SK-N-SH (cell line): ENCODE measurements at regions of chr16 and their contacts with region 1.

Region 1: GRCh38 chr16:57300387-57301125 is 16.1 kb upstream of the PLLP start:
- DNase-seq: peak; percentile 93
- H3K4me3 ChIP-seq: peak overlapping the region; percentile 56 to 62
- H3K27ac ChIP-seq: peak overlapping the region; percentile 76 to 87
- H3K4me1 ChIP-seq: peaks cover 0 to 7% of the 10 kb centered on the region in 2 experiments; a peak in 1 of 4 replicates
- H3K27me3 ChIP-seq: no peaks in the 10 kb centered on the region
- CTCF ChIP-seq: peak; percentile 97
- EP300 ChIP-seq: no peak; a peak in 1 of 4 replicates
- RAD21 ChIP-seq: peak; percentile 100

Region 2: DNA sequence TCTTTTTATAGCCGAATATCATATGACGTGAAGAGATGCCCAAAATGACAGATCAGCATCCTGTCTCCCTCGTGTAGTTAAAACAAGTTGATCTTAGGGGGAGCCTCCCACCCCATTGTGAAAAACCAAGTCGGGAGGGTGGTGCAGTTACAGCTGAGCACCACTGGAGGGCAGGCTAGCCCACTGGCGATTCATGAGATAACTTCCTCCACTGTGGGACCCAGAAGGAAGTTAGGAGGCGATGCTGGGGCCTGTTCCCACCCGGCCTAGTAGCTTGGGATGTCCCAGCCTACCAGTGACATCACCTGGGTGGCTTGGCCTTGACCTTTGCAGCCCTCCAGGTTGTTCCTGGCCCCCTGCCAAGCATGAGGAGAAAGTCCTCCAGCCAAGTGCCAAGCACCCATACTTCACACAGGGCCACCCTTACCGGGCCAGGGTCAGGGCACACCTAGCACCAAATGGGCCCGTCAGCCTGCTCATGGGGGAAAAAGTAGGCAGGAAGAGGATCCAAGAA is 216.2 kb before region 1 on chr16:
- CTCF ChIA-PET with region 1: interaction called, 25 read pairs
- POLR2A ChIA-PET with region 1: no interaction called
- DNase-seq: peak; percentile 87
- H3K4me3 ChIP-seq: peak overlapping the region in 1 of 2 experiments; percentile 47; a peak in 1 of 4 replicates
- H3K27ac ChIP-seq: no peak overlapping the region
- H3K4me1 ChIP-seq: peaks cover 0 to 4% of the 10 kb centered on the region in 2 experiments; a peak in 1 of 4 replicates
- H3K27me3 ChIP-seq: no peaks in the 10 kb centered on the region
- CTCF ChIP-seq: peak; percentile 97
- EP300 ChIP-seq: no peak
- RAD21 ChIP-seq: peak; percentile 91

Region 3: DNA sequence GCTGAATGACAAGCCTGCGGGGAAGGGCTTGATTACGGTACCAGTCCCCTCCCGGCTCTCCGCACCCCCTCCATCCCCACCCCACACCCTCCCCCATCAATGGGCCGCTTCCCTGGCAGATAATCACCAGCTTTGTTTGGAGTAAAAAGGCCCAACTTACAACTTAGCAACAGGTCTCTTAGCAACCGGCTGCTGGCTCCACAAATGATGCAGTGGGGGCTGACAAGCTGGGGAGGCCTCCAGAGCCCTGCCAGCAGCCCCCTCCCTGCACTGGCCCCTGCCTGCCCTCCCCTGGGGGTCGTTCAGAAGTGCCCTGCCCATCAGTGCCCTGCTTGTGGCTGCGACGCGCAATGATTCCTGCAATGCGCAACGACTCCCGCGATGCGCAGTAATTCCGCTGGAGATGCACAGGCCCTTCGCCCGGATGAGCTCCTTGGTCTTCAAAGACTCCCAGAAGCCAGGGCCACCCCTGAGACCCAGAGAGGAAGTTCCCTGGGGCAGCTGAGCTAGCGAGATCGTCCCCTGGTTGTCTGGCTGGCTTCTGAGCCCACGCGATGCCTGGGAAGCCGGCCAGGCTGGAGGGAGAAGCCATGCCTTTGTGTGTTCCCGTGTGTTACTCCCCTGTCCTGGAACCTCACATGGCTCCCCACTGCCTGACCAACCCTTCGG is 184.9 kb before region 1 on chr16:
- CTCF ChIA-PET with region 1: no interaction called
- POLR2A ChIA-PET with region 1: no interaction called
- DNase-seq: peak; percentile 70
- H3K4me3 ChIP-seq: no peak overlapping the region
- H3K27ac ChIP-seq: peak overlapping the region; percentile 51 to 57
- H3K4me1 ChIP-seq: peaks cover 0 to 15% of the 10 kb centered on the region in 2 experiments; a peak in 1 of 4 replicates
- H3K27me3 ChIP-seq: no peaks in the 10 kb centered on the region
- CTCF ChIP-seq: no peak
- EP300 ChIP-seq: no peak
- RAD21 ChIP-seq: no peak

Region 4: GRCh38 chr16:57279780-57280638 is 20.5 kb before region 1 on chr16:
- CTCF ChIA-PET with region 1: interaction called, 11 read pairs
- POLR2A ChIA-PET with region 1: no interaction called
- DNase-seq: no peak
- H3K4me3 ChIP-seq: no peak overlapping the region
- H3K27ac ChIP-seq: no peak overlapping the region
- H3K4me1 ChIP-seq: peaks cover 4 to 5% of the 10 kb centered on the region in 2 experiments; a peak in 2 of 4 replicates
- H3K27me3 ChIP-seq: no peaks in the 10 kb centered on the region
- CTCF ChIP-seq: no peak
- EP300 ChIP-seq: no peak
- RAD21 ChIP-seq: no peak

Region 5: GRCh38 chr16:57372372-57373116 is 72.0 kb after region 1 on chr16 and contains the start of gene CX3CL1:
- CTCF ChIA-PET with region 1: interaction called, 20 read pairs
- POLR2A ChIA-PET with region 1: no interaction called
- DNase-seq: peak; percentile 92
- H3K4me3 ChIP-seq: peak within 1 kb of the TSS; percentile 52 to 72
- H3K27ac ChIP-seq: peak within 1 kb of the TSS; percentile 57 to 96; a peak in 3 of 4 replicates
- H3K4me1 ChIP-seq: peaks cover 25 to 36% of the 10 kb centered on the region in 2 experiments; a peak in 3 of 4 replicates
- H3K27me3 ChIP-seq: no peaks in the 10 kb centered on the region
- CTCF ChIP-seq: peak; percentile 25; the same call in 1 of the 2 replicates
- EP300 ChIP-seq: peak in 1 of 2 experiments; percentile 64; a peak in 1 of 4 replicates
- RAD21 ChIP-seq: peak; percentile 38
- polyA plus RNA-seq, gene CX3CL1: 5.8 and 6.8 TPM in 2 replicates

Region 6: DNA sequence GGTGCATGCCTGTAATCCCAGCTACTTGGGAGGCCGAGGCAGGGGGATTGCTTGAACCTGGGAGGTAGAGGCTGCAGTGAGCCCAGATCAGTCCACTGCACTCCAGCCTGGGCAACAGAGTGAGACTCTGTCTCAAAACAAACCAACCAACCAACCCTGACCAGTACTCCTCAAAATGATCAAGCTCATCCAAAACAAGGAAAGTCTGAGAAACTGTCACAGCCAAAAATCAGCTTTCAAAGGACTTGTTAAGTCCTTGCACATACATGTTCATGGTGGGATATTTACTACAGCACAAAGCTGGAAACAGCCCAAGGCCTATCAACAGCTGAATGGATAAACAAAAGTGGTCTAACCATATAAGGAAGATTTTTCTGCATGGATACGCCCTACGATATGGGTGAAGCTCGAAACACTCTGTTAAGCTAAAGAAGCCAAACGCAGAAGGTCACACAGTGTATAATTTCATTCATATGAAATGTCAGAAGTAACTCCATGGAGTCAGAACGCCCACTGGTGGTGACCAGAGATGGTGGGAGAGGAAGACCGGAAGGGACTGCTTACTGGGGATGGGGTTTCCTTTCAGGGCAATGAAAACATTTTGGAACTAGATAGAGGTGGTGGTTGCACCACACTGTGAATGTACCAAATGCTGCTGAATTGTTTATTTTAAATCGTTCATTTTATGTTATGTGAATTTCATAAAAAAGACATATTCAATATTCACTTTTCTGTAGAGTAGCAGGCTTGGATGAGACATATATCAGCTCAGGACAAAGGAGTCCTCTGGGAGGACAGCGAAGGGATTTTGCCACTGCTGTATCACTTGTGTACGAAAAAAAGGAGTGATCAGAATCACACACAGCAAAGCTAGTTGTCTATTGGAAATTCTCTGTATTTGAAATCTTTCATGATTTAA is 121.7 kb after region 1 on chr16:
- CTCF ChIA-PET with region 1: interaction called, 544 read pairs
- POLR2A ChIA-PET with region 1: interaction called, 12 read pairs
- DNase-seq: peak; percentile 72
- H3K4me3 ChIP-seq: no peak overlapping the region
- H3K27ac ChIP-seq: peak overlapping the region; percentile 17 to 45; a peak in 3 of 4 replicates
- H3K4me1 ChIP-seq: peaks cover 0 to 17% of the 10 kb centered on the region in 2 experiments; a peak in 2 of 4 replicates
- H3K27me3 ChIP-seq: no peaks in the 10 kb centered on the region
- CTCF ChIP-seq: peak; percentile 77
- EP300 ChIP-seq: no peak
- RAD21 ChIP-seq: peak; percentile 86

Region 7: DNA sequence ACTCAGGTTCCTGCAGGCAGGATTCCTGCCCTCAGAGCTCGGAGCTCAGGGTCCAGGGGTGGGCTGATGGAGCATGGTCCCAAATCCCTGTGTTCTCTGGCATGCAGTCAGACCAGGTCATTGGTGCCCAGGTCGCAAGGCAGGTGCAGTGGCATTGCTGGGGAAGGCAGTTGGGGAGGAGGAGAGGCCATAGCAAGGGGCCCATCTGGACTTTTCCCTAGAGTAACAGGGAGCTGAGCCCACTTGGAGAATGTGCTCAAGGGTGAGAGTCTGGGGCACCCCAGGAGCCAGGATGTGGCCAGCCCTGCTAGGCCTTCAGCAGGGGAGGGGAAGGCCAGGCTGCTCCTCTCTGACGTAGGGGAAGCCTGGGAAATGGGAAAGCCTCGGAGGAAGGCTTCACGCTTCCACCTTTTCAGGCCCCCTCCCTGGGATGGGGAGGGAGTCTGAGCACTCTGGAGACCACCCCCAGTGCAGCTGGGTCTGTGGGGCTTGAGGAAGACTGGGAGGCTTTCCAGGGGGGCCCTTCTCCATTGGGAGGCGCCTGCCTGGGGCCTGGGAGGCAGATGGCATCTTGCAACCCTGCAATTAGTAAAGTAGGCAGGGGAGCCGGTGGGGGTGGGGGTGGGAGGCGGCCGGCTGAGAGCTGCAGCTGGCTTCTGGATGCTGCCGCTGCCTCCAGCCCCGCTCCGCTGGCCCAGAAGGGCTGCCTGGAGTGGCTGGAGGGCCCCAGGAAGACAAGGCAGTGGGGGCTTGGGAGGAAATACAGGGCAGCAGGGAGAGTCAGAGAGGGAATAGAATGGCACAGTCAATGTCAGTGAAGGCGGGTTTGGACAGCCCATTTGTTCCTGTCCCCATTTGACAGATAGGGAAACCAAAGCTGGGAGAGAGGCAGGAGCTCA is 206.8 kb after region 1 on chr16:
- CTCF ChIA-PET with region 1: interaction called, 10 read pairs
- POLR2A ChIA-PET with region 1: no interaction called
- DNase-seq: peak; percentile 82
- H3K4me3 ChIP-seq: no peak overlapping the region
- H3K27ac ChIP-seq: peak overlapping the region in 1 of 2 experiments; percentile 99; a peak in 3 of 4 replicates
- H3K4me1 ChIP-seq: peaks cover 0 to 56% of the 10 kb centered on the region in 2 experiments; a peak in 1 of 4 replicates
- H3K27me3 ChIP-seq: no peaks in the 10 kb centered on the region
- CTCF ChIP-seq: no peak
- EP300 ChIP-seq: 0 out of 4 replicates have a peak, but pooled peaks of 1 of the 2 experiments have one; percentile 24
- RAD21 ChIP-seq: no peak

Region 8: GRCh38 chr16:57555831-57556230 is 255.3 kb after region 1 on chr16:
- CTCF ChIA-PET with region 1: no interaction called
- POLR2A ChIA-PET with region 1: no interaction called
- DNase-seq: no peak
- H3K4me3 ChIP-seq: no peak overlapping the region
- H3K27ac ChIP-seq: no peak overlapping the region
- H3K4me1 ChIP-seq: peaks cover 0 to 4% of the 10 kb centered on the region in 2 experiments; a peak in 1 of 4 replicates
- H3K27me3 ChIP-seq: peaks cover 10% of the 10 kb centered on the region; the same call in 1 of the 2 replicates
- CTCF ChIP-seq: no peak
- EP300 ChIP-seq: no peak
- RAD21 ChIP-seq: no peak